ENCODE measurements at regions of chr1 and their contacts with region 1.

Region 1: DNA sequence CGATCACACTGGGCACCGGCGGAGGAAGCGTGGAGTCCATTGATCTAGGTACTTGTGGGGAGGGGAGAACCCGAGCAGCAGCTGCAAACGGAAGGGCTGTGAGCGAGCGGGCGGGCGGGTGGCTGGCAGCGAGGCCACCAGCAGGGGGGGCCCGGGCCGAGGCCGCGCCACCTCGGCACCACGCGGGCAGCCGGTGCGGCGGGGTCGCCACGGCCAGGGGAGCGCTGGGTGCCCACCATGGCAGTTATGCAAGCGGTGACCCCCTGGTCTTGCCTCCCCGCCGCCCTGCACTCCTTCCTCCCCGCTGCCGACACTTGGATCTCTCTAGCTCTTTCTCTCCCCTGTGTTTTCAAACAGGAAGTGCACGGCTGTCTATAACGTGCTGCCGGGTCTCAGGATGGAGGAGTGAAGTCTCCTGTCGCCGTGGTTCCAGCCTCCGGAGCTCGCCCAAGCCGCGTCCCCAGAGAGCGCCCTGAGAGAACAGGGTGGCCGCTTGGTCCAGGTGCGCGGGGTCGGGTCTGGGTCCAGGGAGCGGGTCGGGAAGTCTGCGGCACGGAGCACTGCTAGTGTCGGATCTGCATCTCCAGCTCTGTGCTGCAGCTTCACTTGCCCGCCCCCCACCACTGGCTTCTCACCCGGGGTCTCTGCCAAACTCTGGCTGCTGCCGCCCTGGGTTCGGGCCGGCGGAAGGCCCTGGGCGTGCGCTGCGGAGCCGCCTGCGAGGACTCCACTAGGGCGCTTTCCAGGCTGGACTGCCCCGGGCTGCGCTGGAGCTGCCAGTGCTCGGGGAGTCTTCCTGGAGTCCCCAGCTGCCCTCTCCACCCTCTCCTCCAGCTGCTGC is 22.7 kb downstream of the LRRC8D start:
- DNase-seq: peak; percentile 69 to 90 (median 87)
- ATAC-seq: peak; percentile 95 to 96
- H3K4me3 ChIP-seq: peak overlapping the region; percentile 70
- H3K27ac ChIP-seq: peak overlapping the region; percentile 21
- H3K4me1 ChIP-seq: no peaks in the 10 kb centered on the region
- H3K27me3 ChIP-seq: no peaks in the 10 kb centered on the region

Region 2: GRCh38 chr1:89890085-89890752 is 46.7 kb after region 1 on chr1:
- intact Hi-C with region 1: loop called in 1 of 4 experiments (anchors 10 kb)
- DNase-seq: peak; percentile 28 to 59 (median 57)
- ATAC-seq: peak in 1 of 2 donors; percentile 41
- H3K4me3 ChIP-seq: no peak overlapping the region
- H3K27ac ChIP-seq: no peak overlapping the region
- H3K4me1 ChIP-seq: peaks cover 2% of the 10 kb centered on the region
- H3K27me3 ChIP-seq: no peaks in the 10 kb centered on the region

Region 3: GRCh38 chr1:89987170-89987819 is 143.8 kb after region 1 on chr1:
- intact Hi-C with region 1: loop called in 1 of 4 experiments (anchors 10 kb)
- DNase-seq: no peak
- ATAC-seq: peak; percentile 84 to 88
- H3K4me3 ChIP-seq: no peak overlapping the region
- H3K27ac ChIP-seq: no peak overlapping the region
- H3K4me1 ChIP-seq: no peaks in the 10 kb centered on the region
- H3K27me3 ChIP-seq: no peaks in the 10 kb centered on the region

Measured in right cardiac atrium (tissue), 5 donors.